ENCODE measurements at regions of chr9 and their contacts with region 1.

Region 1: GRCh38 chr9:99732715-99733114 is 89.0 kb upstream of the NR4A3 start:
- DNase-seq: no peak
- ATAC-seq: peak; percentile 55 to 95 (median 74)
- H3K4me3 ChIP-seq: peak overlapping the region in 5 of 10 donors; percentile 13 to 25 (median 17)
- H3K27ac ChIP-seq: peak overlapping the region in 9 of 10 donors; percentile 14 to 77 (median 57)
- H3K4me1 ChIP-seq: peaks cover 0 to 37% (median 14%) of the 10 kb centered on the region in 9 donors
- H3K27me3 ChIP-seq: no peaks in the 10 kb centered on the region
- CTCF ChIP-seq: no peak

Region 2: DNA sequence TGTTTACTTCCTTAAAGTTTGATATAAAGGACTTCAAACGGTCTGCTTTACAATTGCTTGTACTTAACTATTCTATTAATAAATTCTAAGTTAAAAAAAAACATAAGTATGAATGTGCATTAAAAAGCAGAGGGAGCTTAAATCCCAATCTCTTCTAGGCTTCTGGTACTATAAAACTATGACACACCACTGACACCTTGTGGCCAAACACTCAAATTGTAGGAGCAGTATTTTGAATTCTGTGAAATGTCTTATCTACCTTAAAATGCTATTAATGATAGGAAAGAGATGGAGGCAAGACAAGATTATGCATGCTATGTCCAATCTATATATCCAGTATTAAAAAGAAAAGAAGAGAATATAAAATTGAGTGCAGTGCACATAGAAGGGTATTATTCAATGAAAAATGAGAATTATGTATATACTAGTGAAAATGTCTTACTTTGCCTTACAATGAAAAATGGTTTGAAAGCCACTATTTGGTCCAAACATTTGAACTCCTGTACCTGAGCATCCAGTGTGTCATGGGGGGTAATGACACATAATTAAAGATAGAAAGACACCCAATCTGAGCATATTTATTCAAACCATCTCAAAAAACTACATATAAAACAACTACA is 278.5 kb after region 1 on chr9:
- intact Hi-C with region 1: loop called in 1 of 10 experiments (anchors 5 kb)
- DNase-seq: no peak
- ATAC-seq: no peak
- H3K4me3 ChIP-seq: no peak overlapping the region
- H3K27ac ChIP-seq: no peak overlapping the region
- H3K4me1 ChIP-seq: no peaks in the 10 kb centered on the region
- H3K27me3 ChIP-seq: no peaks in the 10 kb centered on the region
- CTCF ChIP-seq: peak in 7 of 9 donors; percentile 44 to 64 (median 57)

Measured in heart right ventricle (tissue), 16 donors.